BJ (cell line): ENCODE measurements at regions of chr19 and their contacts with region 1.

Region 1: DNA sequence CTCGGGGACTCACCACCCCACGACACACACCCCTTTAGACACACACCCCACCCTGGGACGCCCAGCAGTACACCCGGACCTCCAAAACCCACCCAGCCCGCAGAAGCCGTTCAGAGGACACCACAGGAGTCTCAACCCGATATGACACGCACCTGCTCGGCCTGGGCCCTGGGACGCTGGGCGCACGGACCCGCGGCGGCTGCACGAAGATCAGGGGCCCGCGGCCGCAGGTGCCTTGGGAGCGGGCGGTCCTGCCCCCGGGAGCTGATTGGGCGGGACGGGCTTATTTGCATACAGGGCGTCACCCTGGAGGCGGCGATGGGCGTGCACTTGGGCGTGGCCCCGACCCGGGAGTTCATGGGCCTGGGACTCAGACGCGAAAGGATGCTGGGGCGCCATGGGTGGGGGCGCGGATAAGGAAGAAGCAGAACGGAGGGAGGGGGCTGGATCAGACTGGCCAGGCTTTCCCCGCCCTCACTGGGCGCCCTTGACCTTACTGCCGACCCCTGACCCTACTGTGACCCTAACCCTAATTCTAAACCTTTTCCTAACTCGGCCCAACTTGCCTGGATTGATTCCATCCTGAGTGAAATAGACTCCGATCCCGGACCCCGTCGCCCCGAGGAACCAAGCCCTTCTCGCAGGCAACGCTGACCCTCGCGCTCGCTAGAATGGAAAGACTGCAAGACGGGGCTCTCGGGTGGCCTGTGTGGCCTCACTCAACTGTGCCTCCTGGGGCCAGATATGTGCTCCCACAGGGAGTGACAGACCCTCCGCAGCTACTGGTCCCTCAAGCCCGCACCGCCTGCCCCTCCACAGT is at the start of gene MEF2B:
- DNase-seq: no peak
- H3K4me3 ChIP-seq: peak within 1 kb of the TSS; percentile 23
- H3K27me3 ChIP-seq: no peaks in the 10 kb centered on the region
- CTCF ChIP-seq: no peak
- polyA plus RNA-seq, gene MEF2B: 0.10 and 0.39 TPM in 2 replicates

Region 2: DNA sequence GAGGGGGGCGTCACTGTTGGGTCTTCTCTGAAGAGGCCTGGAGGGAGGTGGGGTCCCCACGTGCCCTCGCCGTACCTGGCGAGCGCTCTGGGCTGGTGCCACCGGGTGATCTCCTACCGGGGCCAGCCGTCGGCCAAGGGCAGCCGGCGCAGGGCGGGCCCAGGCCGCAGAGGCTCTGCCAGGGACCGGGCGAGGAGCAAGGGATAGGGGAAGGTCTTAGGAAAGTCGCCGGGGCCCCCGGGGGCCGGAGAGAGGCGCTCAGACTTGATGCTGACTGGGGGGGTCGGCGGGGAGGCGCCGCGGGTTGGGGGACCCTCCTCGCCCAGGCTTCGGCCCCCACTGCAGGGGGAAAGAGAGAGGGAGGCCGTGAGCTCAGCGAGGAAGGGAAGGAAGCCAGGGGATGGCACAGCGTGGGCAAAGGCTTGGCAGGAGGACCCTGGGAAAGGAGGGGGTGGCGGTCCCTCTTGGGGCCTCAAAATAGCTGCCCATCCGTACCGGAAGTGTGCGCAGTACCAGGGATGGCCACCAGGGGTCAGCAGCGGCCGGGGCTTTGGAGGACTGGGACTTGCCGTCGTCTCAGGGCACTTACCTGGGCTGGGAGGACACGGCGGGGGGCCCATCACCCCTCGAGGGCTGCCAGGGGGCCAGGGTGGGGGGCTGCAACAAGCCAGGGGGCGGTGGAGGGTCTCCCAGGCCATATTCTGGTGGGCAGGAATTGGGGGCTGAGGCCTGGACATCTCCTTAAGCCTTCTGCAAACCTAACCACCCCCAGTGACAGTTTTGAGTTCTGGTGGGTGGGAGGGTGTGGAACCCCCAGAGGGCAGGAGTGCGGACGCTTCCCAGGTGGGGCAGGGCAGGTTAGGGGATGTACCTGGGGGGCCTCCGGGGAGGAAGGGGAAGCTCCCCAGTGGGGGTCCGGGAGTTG is 24.3 kb before region 1 on chr19:
- CTCF ChIA-PET with region 1: interaction called, 80 read pairs
- POLR2A ChIA-PET with region 1: no interaction called
- DNase-seq: no peak
- H3K4me3 ChIP-seq: no peak overlapping the region
- H3K27me3 ChIP-seq: no peaks in the 10 kb centered on the region
- CTCF ChIP-seq: peak; percentile 99

Region 3: DNA sequence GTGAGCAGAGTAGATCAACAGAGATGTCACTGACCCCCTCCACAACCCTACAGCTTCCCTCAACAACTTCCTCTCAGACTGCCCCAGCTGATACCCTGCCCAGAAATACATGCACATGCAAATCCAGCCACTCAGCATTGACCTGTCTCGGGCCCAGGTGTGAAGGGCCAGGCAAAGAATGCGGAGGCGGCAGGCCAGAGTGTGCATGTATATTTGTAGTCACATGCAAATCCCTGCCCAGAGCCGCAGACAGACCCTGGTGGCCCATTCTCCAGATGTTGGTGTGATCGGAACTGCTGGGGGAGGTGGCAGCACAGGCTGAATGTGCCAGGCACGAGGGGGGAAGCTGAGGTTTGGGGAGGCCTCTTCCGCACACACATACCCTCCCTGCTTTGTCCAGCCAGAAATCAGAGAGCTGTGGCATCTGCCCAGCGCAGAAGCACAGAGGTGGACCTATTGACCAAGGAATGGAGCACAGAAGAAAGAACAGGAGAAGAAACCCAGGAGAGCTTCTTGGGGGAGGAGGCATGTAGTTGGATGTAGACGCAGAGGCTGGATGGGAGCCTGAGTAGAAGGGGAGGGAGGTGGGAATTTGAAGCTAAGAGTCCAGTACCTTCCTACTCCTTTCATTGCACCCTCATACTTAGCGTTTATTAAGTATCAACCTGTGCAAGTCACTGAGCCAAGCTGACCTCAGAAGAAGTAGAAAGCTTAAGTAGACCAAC is 14.6 kb before region 1 on chr19:
- CTCF ChIA-PET with region 1: interaction called, 80 read pairs
- POLR2A ChIA-PET with region 1: no interaction called
- DNase-seq: no peak
- H3K4me3 ChIP-seq: no peak overlapping the region
- H3K27me3 ChIP-seq: no peaks in the 10 kb centered on the region
- CTCF ChIP-seq: no peak

Region 4: GRCh38 chr19:19192078-19192882 is 22.0 kb after region 1 on chr19 and contains the starts of genes BORCS8 and RFXANK:
- CTCF ChIA-PET with region 1: interaction called, 11 read pairs
- POLR2A ChIA-PET with region 1: no interaction called
- DNase-seq: peak; percentile 96
- H3K4me3 ChIP-seq: peak within 1 kb of the TSS; percentile 100
- H3K27me3 ChIP-seq: no peaks in the 10 kb centered on the region
- CTCF ChIP-seq: no peak
- polyA plus RNA-seq, gene BORCS8: 23.2 and 27.5 TPM in 2 replicates
- polyA plus RNA-seq, gene RFXANK: 61.6 and 72.5 TPM in 2 replicates

Region 5: GRCh38 chr19:19224852-19225494 is 54.7 kb after region 1 on chr19:
- CTCF ChIA-PET with region 1: no interaction called
- POLR2A ChIA-PET with region 1: no interaction called
- DNase-seq: no peak
- H3K4me3 ChIP-seq: peak overlapping the region; percentile 23
- H3K27me3 ChIP-seq: peaks cover 8% of the 10 kb centered on the region
- CTCF ChIP-seq: peak; percentile 75

Region 6: GRCh38 chr19:19459707-19460251 is 289.5 kb after region 1 on chr19:
- CTCF ChIA-PET with region 1: no interaction called
- POLR2A ChIA-PET with region 1: no interaction called
- DNase-seq: peak; percentile 38
- H3K4me3 ChIP-seq: no peak overlapping the region
- H3K27me3 ChIP-seq: no peaks in the 10 kb centered on the region
- CTCF ChIP-seq: no peak